ENCODE measurements at regions of chr6 and their contacts with region 1.

Region 1: DNA sequence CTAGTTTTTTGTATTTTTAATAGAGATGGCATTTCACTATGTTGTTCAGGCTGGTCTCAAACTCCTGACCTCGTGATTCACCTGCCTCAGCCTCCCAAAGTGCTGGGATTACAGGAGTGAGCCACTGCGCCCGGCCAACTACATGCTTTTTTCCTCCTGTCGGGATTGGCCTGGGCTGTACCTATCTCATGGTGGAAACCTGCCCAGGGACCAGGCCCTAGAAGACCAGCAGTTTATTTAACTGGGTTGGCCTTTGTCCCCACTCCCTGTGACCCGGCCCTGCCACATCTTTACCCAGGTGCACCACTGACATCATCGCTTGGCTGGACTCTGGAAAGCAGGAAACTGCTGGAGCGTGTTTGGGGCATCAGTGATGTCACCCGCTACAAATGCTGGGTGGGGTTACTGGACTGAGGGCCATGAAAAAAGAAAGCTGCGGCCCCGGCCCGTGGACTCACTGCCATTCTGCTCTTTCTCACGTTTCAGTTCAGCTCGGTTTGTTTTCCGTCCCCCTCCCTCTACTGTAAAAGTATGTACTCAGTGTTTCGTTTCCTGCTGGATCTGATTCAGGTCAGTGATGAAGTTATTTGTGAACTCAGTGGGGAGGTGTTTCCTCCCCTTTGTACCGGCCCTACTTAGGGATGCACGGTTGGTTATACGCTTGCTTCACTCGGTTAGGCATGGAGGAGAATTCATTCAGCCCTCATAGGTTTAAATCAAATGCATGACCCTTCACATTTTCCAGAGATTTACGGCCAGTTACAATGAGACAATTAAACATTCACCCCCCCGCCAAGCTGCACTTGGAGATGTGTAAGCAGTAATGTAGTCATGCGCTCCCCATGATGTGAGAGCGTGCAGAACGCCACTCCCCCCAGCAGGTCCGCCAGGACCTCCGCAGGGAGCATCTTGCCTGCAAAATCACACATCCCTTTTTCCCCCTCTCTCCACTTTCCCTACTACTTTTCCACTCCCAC is 179.3 kb downstream of the MTHFD1L start:
- DNase-seq: peak; percentile 85
- H3K4me3 Mint-ChIP-seq: peak overlapping the region; percentile 57
- H3K27ac Mint-ChIP-seq: peak overlapping the region; percentile 95
- H3K4me1 Mint-ChIP-seq: peaks cover 56% of the 10 kb centered on the region
- H3K27me3 Mint-ChIP-seq: no peaks in the 10 kb centered on the region
- CTCF ChIP-seq: no peak

Region 2: DNA sequence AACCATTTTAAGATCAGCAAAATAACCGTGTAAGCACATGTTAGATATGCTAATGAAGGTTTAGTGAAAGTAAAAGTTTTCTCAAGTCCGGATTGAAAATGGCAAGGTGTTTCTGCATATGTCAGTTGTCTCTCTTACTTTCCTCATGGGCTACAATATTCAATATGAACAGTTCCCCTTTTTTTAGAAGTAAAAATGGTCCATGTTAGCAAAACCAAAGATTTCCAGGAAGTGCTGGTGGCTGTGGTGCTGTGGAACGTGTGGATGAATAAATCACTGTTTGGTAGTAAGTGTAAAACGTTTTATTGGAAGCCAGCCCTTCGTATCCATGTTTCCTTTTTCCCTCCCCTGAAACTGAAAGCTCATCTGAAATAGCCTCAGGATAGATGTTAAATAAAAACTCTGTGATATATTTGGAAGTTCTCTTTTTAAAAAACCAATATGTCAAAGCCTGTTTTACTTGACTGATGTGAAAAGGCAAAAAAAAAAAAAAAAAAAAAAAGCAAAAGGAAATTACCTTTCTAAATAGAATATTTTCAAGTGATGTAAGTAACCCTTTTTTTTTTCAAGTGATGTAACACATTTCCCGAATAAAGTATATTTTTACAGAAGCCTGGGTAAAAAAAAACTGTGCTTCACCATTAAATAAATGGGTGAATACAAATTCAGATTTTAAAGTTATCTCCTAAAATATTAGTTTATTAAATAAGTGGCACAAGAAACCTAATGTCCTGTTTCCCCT is 403.2 kb before region 1 on chr6:
- CTCF ChIA-PET with region 1: no interaction called
- intact Hi-C with region 1: no loop called
- DNase-seq: no peak
- H3K4me3 Mint-ChIP-seq: peak overlapping the region; percentile 24
- H3K27ac Mint-ChIP-seq: no peak overlapping the region
- H3K4me1 Mint-ChIP-seq: peaks cover 31% of the 10 kb centered on the region
- H3K27me3 Mint-ChIP-seq: no peaks in the 10 kb centered on the region
- CTCF ChIP-seq: no peak

Region 3: GRCh38 chr6:150959166-150959565 is 85.6 kb before region 1 on chr6:
- CTCF ChIA-PET with region 1: no interaction called
- intact Hi-C with region 1: no loop called
- DNase-seq: no peak
- H3K4me3 Mint-ChIP-seq: no peak overlapping the region
- H3K27ac Mint-ChIP-seq: no peak overlapping the region
- H3K4me1 Mint-ChIP-seq: no peaks in the 10 kb centered on the region
- H3K27me3 Mint-ChIP-seq: no peaks in the 10 kb centered on the region
- CTCF ChIP-seq: no peak

Region 4: DNA sequence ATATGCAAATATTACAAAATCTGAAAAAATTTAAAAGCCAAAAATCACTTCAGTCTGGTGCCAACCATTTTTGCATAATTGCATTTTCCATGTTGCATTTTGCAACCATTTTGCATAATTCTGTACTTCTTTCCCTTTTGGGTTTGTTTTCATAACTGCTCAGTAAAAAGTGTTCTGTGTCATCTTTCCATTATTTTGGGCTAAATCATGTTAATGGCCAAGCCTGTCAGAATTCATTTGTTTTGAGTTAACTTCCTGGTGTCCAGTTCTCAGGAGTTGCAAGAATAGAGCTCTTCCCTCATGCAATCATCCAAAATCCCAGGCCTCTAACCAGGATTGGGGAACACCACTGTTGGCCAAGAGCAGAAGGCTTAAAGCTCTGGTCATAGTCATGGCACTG is 45.6 kb before region 1 on chr6:
- CTCF ChIA-PET with region 1: no interaction called
- intact Hi-C with region 1: no loop called
- DNase-seq: no peak
- H3K4me3 Mint-ChIP-seq: no peak overlapping the region
- H3K27ac Mint-ChIP-seq: no peak overlapping the region
- H3K4me1 Mint-ChIP-seq: peaks cover 1% of the 10 kb centered on the region
- H3K27me3 Mint-ChIP-seq: no peaks in the 10 kb centered on the region
- CTCF ChIP-seq: no peak

Region 5: GRCh38 chr6:151060096-151060765 is 15.5 kb after region 1 on chr6:
- CTCF ChIA-PET with region 1: interaction called, 3 read pairs
- intact Hi-C with region 1: loop called (anchors 1 kb)
- DNase-seq: no peak
- H3K4me3 Mint-ChIP-seq: peak overlapping the region; percentile 31
- H3K27ac Mint-ChIP-seq: peak overlapping the region; percentile 76
- H3K4me1 Mint-ChIP-seq: peaks cover 21% of the 10 kb centered on the region
- H3K27me3 Mint-ChIP-seq: no peaks in the 10 kb centered on the region
- CTCF ChIP-seq: no peak

Region 6: DNA sequence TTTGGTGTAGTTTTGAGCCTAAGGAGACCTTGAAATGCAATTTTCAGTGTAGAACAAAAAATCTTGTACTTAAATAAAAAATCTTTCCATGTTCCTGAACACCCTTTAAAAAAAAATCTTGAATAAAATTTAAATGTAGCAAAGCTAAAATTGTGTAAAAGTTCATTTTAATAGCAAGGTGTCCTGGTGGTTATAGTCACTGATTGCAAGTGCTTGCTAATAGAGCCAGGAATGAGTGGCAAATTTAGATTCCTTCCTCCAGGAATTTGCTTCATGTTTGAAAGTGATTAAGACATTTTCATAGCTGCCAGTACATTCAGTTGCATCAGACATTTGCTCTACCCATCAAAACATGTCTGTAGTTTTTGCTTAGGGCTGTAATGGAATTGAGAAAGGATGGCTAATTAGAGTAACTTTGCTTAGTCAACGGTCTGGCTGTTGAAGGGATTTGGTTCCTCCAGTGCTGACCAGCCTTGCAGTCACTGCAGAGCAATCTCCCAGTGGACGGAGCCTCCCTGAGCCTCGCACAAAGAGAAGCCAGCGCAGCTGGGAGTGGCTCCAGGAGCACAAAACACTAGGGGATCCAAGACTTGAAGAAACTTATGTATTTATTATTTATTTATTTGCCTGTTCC is 231.5 kb after region 1 on chr6:
- CTCF ChIA-PET with region 1: no interaction called
- intact Hi-C with region 1: no loop called
- DNase-seq: no peak
- H3K4me3 Mint-ChIP-seq: no peak overlapping the region
- H3K27ac Mint-ChIP-seq: no peak overlapping the region
- H3K4me1 Mint-ChIP-seq: no peaks in the 10 kb centered on the region
- H3K27me3 Mint-ChIP-seq: no peaks in the 10 kb centered on the region
- CTCF ChIP-seq: no peak

Region 7: DNA sequence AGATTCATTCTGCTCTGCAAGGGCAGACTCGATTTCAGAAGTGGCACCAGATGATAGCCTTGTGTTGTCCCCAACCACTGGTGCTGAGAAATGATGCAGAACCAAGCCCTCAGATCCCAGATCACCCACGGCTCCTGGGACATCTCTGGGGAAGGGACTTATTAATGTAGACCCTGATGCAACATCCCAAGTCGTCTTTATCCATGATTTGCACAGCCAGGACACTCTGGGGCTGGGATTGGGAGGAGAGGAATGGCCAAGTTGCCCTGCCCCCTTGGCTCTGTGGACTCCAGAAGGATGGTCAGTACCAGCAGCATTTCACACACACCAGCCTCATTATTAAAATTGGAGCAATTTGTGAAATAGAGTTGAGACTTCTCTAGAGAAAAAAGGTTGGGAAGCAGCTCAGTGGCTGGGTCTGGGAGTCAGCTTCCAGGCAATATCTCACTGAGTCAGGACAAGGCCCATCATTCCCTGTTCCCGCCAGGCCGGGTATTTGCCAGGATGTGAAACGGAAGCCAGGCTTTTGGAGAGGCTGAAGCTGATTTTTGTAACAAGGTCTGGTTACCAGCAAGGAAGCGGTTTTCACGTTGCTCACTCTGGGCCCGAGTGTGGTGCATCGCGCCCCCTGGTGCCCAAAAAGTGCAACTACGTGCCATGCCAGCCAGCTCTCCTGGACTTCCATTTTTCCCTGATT is 279.2 kb after region 1 on chr6:
- CTCF ChIA-PET with region 1: interaction called, 4 read pairs
- intact Hi-C with region 1: loop called (anchors 10 kb)
- DNase-seq: peak; percentile 84
- H3K4me3 Mint-ChIP-seq: peak overlapping the region; percentile 76
- H3K27ac Mint-ChIP-seq: peak overlapping the region; percentile 61
- H3K4me1 Mint-ChIP-seq: peaks cover 14% of the 10 kb centered on the region
- H3K27me3 Mint-ChIP-seq: no peaks in the 10 kb centered on the region
- CTCF ChIP-seq: peak; percentile 87